Dendritic cell treated with granulocyte-macrophage colony-stimulating factor and Interleukin-4, amounts not matched to agents 40 ng/mL and 50 ng/mL, for 4 days (primary cell): ENCODE measurements at regions of chr6 and their contacts with region 1.

Region 1: DNA sequence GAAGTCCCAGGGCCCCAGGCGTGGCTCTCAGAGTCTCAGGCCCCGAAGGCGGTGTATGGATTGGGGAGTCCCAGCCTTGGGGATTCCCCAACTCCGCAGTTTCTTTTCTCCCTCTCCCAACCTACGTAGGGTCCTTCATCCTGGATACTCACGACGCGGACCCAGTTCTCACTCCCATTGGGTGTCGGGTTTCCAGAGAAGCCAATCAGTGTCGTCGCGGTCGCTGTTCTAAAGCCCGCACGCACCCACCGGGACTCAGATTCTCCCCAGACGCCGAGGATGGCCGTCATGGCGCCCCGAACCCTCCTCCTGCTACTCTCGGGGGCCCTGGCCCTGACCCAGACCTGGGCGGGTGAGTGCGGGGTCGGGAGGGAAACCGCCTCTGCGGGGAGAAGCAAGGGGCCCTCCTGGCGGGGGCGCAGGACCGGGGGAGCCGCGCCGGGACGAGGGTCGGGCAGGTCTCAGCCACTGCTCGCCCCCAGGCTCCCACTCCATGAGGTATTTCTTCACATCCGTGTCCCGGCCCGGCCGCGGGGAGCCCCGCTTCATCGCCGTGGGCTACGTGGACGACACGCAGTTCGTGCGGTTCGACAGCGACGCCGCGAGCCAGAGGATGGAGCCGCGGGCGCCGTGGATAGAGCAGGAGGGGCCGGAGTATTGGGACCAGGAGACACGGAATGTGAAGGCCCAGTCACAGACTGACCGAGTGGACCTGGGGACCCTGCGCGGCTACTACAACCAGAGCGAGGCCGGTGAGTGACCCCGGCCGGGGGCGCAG is at the start of gene HLA-A:
- H3K4me3 Mint-ChIP-seq: peak within 1 kb of the TSS; percentile 94
- H3K27ac Mint-ChIP-seq: peak within 1 kb of the TSS; percentile 96
- H3K4me1 Mint-ChIP-seq: peaks cover 59% of the 10 kb centered on the region
- H3K27me3 Mint-ChIP-seq: no peaks in the 10 kb centered on the region

Region 2: GRCh38 chr6:29953001-29953441 is 10.6 kb after region 1 on chr6:
- intact Hi-C with region 1: no loop called
- H3K4me3 Mint-ChIP-seq: no peak overlapping the region
- H3K27ac Mint-ChIP-seq: peak overlapping the region; percentile 45
- H3K4me1 Mint-ChIP-seq: peaks cover 17% of the 10 kb centered on the region
- H3K27me3 Mint-ChIP-seq: no peaks in the 10 kb centered on the region

Region 3: GRCh38 chr6:30066577-30067459 is 124.4 kb after region 1 on chr6 and contains the start of gene PPP1R11:
- intact Hi-C with region 1: loop called (anchors 10 kb)
- H3K4me3 Mint-ChIP-seq: peak within 1 kb of the TSS; percentile 88
- H3K27ac Mint-ChIP-seq: peak within 1 kb of the TSS; percentile 96
- H3K4me1 Mint-ChIP-seq: peaks cover 69% of the 10 kb centered on the region
- H3K27me3 Mint-ChIP-seq: peaks cover 24% of the 10 kb centered on the region